Lower lobe of right lung (tissue), 2 donors: ENCODE measurements at regions of chr7 and their contacts with region 1.

Region 1: DNA sequence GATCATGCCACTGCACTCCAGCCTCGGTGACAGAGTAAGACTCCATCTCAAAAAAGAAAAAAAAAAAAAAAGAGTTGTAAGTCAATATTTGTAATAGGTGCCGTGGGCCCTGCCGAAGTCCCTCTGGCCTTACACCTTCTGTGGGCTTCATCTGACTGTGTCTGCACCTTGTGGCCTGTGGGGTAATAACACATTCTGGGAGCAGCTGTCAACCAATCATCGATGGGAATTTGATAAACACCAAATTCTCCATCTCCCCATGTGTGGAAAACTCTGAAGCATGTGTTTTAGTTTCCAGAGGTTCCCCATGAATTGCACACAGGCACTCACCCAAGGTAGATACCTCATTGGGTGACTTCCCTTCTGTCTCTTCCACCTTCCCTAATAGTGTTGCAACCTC is 10.8 kb downstream of the ZNF394 start:
- DNase-seq: no peak
- ATAC-seq: peak in 1 of 2 donors; percentile 41
- H3K4me3 ChIP-seq: no peak overlapping the region
- H3K27ac ChIP-seq: no peak overlapping the region
- H3K4me1 ChIP-seq: no peaks in the 10 kb centered on the region
- H3K27me3 ChIP-seq: no peaks in the 10 kb centered on the region
- CTCF ChIP-seq: no peak

Region 2: GRCh38 chr7:99357701-99358490 is 131.3 kb before region 1 on chr7:
- intact Hi-C with region 1: no loop called
- DNase-seq: no peak
- ATAC-seq: no peak
- H3K4me3 ChIP-seq: no peak overlapping the region
- H3K27ac ChIP-seq: no peak overlapping the region
- H3K4me1 ChIP-seq: no peaks in the 10 kb centered on the region
- H3K27me3 ChIP-seq: no peaks in the 10 kb centered on the region
- CTCF ChIP-seq: no peak

Region 3: DNA sequence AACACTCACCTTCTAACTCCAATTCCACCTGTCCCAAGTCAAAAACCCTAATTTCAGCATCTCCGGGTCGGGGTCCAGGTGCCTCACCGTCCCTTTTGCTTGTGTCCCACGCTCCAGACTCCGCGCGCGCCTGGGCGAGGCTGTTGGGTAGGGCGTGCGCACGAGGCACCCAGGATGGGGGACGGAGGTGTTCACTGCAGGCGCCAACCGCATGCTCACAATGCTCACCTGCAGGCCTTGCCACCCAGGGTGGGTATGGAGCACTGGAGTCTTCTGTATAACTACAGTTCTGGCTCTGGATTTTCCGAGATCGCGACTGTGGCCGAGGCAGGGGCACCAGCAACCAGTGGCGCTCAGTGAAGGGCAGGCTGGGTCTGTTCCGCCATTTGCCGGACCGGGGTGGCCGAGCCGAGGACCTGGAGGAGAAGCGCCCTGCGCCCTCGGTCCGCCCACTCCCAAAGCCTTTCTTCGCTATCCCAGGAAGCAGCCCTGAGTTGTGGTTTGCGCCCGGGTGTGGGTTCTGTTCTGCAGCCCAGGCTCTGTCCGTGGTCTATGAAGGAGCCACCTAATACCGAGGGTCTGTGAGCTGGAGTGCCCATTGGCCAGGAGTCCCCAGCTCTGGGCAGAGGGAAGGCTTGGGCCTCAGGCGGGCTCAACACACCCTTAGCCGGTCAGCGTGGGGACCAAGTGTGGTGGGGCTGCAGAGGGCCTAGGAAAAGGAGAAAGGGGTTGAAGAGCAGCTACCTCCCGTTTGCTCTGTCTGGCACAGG is 54.0 kb after region 1 on chr7:
- intact Hi-C with region 1: loop called (anchors 10 kb)
- DNase-seq: no peak
- ATAC-seq: peak in 1 of 2 donors; percentile 35
- H3K4me3 ChIP-seq: no peak overlapping the region
- H3K27ac ChIP-seq: no peak overlapping the region
- H3K4me1 ChIP-seq: no peaks in the 10 kb centered on the region
- H3K27me3 ChIP-seq: no peaks in the 10 kb centered on the region
- CTCF ChIP-seq: no peak